ENCODE measurements at regions of chr7 and their contacts with region 1.

Region 1: GRCh38 chr7:137985253-137985896 is 16.5 kb downstream of the CREB3L2 start:
- DNase-seq: no peak
- H3K4me3 Mint-ChIP-seq: no peak overlapping the region
- H3K27ac Mint-ChIP-seq: no peak overlapping the region
- H3K4me1 Mint-ChIP-seq: peaks cover 14% of the 10 kb centered on the region
- H3K27me3 Mint-ChIP-seq: no peaks in the 10 kb centered on the region
- CTCF ChIP-seq: no peak

Region 2: GRCh38 chr7:137718355-137718754 is 267.0 kb before region 1 on chr7:
- CTCF ChIA-PET with region 1: interaction called, 10 read pairs
- POLR2A ChIA-PET with region 1: no interaction called
- intact Hi-C with region 1: no loop called
- DNase-seq: no peak
- H3K4me3 Mint-ChIP-seq: no peak overlapping the region
- H3K27ac Mint-ChIP-seq: no peak overlapping the region
- H3K4me1 Mint-ChIP-seq: peaks cover 5% of the 10 kb centered on the region
- H3K27me3 Mint-ChIP-seq: no peaks in the 10 kb centered on the region
- CTCF ChIP-seq: no peak

Region 3: DNA sequence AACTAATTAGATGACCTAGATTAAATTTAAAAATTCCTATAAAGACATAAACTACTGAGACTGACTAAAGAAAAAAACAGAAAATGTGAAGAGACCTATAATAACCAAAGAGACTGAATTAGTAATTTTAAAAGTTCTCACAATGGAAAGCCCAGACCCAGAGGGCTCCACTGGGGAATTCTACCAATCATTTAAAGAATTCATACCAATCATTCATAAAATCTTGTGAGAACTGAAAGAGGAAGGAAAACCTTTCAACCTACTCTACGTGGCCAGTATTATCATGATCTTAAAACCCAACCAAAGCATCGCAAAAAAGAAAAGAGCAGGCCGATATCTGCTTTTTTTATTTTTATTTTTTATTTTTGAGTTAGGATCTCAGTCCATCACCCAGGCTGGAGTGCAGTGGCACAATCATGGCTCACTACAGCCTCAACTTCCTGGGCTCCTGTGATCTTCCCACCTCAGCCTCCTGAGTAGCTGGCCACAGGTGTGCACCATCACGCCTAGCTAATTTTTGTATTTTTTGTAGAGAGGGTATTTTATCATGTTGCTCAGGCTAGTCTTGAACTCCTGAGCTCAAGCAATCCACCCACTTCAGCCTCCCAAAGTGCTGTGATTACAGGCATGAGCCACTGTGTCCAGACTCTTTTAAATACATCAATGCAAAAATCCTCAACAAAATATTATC is 187.2 kb before region 1 on chr7:
- CTCF ChIA-PET with region 1: no interaction called
- POLR2A ChIA-PET with region 1: no interaction called
- intact Hi-C with region 1: no loop called
- DNase-seq: no peak
- H3K4me3 Mint-ChIP-seq: no peak overlapping the region
- H3K27ac Mint-ChIP-seq: no peak overlapping the region
- H3K4me1 Mint-ChIP-seq: peaks cover 5% of the 10 kb centered on the region
- H3K27me3 Mint-ChIP-seq: no peaks in the 10 kb centered on the region
- CTCF ChIP-seq: no peak

Measured in MCF 10A (cell line).